Ovary (tissue), 10 donors: ENCODE measurements at regions of chr9 and their contacts with region 1.

Region 1: GRCh38 chr9:83125671-83126070 is 62.7 kb upstream of the RASEF start:
- DNase-seq: no peak
- H3K4me3 ChIP-seq: no peak overlapping the region
- H3K27ac ChIP-seq: no peak overlapping the region
- H3K4me1 ChIP-seq: no peaks in the 10 kb centered on the region
- H3K27me3 ChIP-seq: no peaks in the 10 kb centered on the region
- CTCF ChIP-seq: no peak
- EP300 ChIP-seq: no peak
- POLR2A ChIP-seq: no peak

Region 2: GRCh38 chr9:83097633-83098032 is 28.0 kb before region 1 on chr9:
- intact Hi-C with region 1: loop called in 1 of 4 experiments (anchors 2 kb)
- DNase-seq: no peak
- H3K4me3 ChIP-seq: no peak overlapping the region
- H3K27ac ChIP-seq: no peak overlapping the region
- H3K4me1 ChIP-seq: no peaks in the 10 kb centered on the region
- H3K27me3 ChIP-seq: no peaks in the 10 kb centered on the region
- CTCF ChIP-seq: no peak
- EP300 ChIP-seq: no peak
- POLR2A ChIP-seq: no peak

Region 3: GRCh38 chr9:83681490-83681889 is 555.8 kb after region 1 on chr9:
- intact Hi-C with region 1: no loop called
- DNase-seq: no peak
- H3K4me3 ChIP-seq: no peak overlapping the region
- H3K27ac ChIP-seq: no peak overlapping the region
- H3K4me1 ChIP-seq: no peaks in the 10 kb centered on the region
- H3K27me3 ChIP-seq: no peaks in the 10 kb centered on the region
- CTCF ChIP-seq: no peak
- EP300 ChIP-seq: no peak
- POLR2A ChIP-seq: no peak